Posterior vena cava (tissue), 2 donors: ENCODE measurements at regions of chr20 and their contacts with region 1.

Region 1: DNA sequence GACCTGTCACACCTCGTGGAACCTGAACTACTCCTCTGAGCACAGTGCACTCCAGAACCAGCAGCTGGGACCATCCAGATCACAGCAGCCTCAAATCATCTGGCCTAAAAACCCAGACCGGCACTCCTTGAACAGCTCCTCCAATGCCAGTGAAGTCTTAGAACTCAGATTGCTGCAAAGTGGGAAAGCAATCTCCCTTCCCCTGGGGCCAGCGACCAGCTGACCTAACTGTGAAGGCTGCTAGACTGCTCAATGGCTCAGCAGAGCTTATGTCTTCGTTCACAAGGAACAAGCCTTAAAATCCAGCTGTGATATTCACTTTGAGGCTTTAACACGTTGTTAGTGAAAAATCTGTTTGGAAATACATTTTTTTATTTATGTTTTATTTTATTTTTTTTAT is 243.2 kb downstream of the ANKRD60 start:
- DNase-seq: no peak

Region 2: DNA sequence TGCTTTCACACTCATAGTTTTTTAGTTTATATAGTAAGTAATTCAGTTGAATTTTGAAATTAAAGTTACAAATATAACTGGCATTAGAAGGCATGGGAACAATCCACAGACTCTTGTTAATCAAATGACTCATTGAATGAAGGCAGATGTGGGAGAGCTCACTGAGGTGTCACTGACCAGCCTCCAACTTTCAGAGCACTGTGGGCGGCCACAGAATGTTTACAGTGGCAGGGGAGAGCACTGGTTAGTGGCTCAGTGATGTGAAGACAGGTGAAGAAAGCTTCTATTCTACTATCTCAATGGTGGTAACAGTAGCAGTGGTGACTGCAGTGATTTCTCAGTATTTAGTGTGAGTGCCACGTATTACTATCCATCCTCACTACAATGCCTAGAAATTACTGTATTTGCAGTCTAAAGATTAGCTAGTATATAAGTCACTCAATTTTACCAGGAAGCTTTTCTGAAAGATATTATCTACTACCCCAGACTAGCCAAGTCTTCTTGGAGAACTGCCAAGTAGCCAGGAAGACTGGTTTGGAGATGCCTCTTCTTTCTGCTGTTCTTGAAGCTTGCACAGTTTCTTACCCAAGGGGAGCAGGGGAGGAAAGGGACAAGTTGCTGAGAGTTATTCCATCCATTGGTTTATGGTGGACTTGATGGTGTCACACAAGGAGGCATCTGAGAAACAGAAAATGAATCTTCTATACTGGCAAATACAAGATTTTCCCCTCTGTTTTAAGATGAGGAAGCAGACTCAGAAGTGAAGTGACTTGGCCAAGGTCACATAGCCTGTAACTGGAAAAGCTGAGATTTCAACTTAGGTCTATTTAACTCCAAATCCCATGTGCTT is 11.9 kb after region 1 on chr20:
- intact Hi-C with region 1: loop called in 1 of 2 experiments (anchors 1 kb)
- DNase-seq: no peak

Region 3: DNA sequence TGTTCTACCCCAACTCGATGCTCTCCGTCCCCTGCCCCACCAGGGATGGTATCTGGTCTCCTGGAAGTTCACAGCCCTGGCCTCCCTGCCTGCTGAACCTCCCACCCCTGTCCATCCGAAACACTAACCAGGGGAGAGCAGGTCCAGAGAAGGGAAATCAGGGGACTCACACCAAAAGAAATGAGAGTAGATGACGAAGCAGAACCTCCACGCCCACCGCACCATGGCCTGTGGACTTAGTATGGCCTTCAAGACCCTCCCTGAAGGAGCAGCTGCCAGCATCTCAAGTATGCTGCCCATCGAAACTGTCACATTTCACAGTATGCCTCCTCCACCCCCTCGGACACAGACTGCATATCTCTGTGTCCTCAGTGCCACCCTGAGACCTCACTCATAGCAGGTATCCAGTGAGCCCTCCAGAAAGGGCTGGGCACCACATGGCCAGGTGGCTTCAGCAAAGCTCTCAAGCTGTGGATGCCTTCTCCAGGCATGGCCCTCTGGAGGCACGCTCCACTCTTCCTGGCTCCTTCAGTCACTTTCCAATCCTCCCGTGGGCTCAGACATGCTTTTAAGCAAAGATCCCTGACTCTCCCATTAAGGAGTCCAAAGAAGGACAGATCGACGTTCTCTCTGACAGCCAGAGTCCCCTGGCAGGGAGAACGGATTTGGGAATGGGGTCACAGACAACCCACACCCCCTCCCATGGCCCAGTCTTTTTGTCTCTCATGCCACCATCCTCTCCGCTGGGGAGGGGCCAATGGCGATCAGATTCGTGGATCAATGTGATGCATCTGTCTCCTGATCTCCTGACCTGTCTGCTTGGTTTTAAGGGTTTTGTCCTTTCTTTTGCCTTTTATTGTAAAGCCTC is 84.8 kb after region 1 on chr20:
- intact Hi-C with region 1: loop called in 1 of 2 experiments (anchors 1 kb)
- DNase-seq: no peak